ENCODE measurements at regions of chr6 and their contacts with region 1.

Region 1: DNA sequence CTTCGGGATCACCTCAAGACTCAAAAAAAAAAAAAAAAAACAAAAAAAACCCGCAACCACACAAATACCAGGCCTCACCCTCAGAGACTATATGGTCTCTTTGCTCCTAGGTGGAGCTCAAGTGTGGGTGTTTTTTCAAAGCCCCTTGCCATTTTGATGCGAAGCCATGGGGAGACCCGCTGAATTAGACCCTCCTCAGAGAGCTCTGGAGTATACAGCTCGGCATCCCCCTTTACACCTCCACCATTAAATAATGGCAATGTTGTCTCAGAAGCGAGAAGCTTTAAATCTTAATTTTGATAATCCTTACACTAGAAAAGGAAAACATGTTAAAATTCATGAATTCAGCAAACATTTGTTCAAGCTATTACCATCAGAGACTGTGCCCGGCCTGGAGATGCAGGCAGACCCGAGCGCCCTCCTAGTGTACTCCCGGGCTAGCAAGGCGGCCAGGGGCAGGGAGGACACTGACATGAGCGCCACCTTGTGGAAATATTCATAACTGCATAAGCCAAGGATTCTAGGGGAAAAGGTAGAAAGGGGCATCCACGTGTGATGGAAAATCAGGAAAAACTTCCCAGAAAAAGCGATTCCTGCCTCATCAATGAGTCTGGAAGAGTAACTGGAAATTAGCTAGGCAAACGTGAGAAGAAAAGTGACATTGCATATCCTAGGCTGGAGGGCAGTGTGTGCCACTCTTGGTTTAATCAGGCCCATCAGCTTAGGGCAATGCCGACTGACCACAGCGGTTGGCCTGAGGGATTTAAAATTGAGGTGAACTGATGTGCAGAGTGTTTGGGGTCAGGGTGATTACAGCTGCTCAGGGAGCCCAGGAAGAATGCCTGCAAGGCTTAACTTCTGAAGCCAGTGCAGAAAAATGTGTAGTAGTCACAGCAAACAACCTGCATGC is 72.5 kb downstream of the B3GAT2 start:
- DNase-seq: peak; percentile 29 to 89
- H3K4me3 ChIP-seq: no peak overlapping the region
- H3K27ac ChIP-seq: no peak overlapping the region
- H3K4me1 ChIP-seq: peaks cover 5 to 17% (median 11%) of the 10 kb centered on the region in 4 experiments
- H3K27me3 ChIP-seq: no peaks in the 10 kb centered on the region
- CTCF ChIP-seq: peak; percentile 74 to 94 (median 82)
- EP300 ChIP-seq: no peak
- POLR2A ChIP-seq: no peak
- RAD21 ChIP-seq: peak; percentile 91 to 92

Region 2: GRCh38 chr6:70706491-70707123 is 177.7 kb before region 1 on chr6:
- CTCF ChIA-PET with region 1: interaction called, 62 read pairs
- POLR2A ChIA-PET with region 1: no interaction called
- DNase-seq: no peak
- H3K4me3 ChIP-seq: no peak overlapping the region
- H3K27ac ChIP-seq: no peak overlapping the region
- H3K4me1 ChIP-seq: peaks cover 0 to 6% (median 0%) of the 10 kb centered on the region in 4 experiments; a peak in 1 of 7 replicates
- H3K27me3 ChIP-seq: no peaks in the 10 kb centered on the region
- CTCF ChIP-seq: peak in 2 of 3 experiments; percentile 13 to 39; a peak in 2 of 4 replicates
- EP300 ChIP-seq: no peak
- POLR2A ChIP-seq: no peak
- RAD21 ChIP-seq: peak; percentile 51 to 63

Region 3: GRCh38 chr6:70839286-70840266 is 44.8 kb before region 1 on chr6:
- CTCF ChIA-PET with region 1: interaction called, 10 read pairs
- POLR2A ChIA-PET with region 1: no interaction called
- DNase-seq: no peak
- H3K4me3 ChIP-seq: no peak overlapping the region
- H3K27ac ChIP-seq: no peak overlapping the region
- H3K4me1 ChIP-seq: peaks cover 0 to 3% (median 0%) of the 10 kb centered on the region in 4 experiments; a peak in 1 of 7 replicates
- H3K27me3 ChIP-seq: no peaks in the 10 kb centered on the region
- CTCF ChIP-seq: no peak
- EP300 ChIP-seq: no peak
- POLR2A ChIP-seq: no peak
- RAD21 ChIP-seq: no peak

Region 4: DNA sequence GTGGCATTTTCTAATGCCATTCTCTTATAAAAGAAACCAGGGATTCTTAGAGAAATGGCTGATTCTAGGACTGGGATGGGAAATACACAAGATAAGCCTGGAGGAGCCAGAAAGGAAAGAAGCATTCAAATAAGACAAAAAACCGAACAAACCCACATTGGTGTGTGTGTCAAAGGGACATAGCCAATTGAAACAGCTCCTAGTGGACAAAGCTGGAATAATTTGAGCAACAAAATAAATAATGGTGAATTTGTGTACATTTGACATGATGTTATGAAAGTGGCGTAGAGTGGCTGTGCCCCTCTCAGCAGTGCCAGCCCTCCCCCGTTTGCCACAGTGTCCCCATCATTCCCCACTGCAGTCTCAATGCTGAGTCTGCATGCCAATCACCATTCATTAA is 17.0 kb after region 1 on chr6:
- CTCF ChIA-PET with region 1: interaction called, 10 read pairs
- POLR2A ChIA-PET with region 1: no interaction called
- DNase-seq: no peak
- H3K4me3 ChIP-seq: no peak overlapping the region
- H3K27ac ChIP-seq: no peak overlapping the region
- H3K4me1 ChIP-seq: peaks cover 0 to 3% (median 0%) of the 10 kb centered on the region in 4 experiments; a peak in 1 of 7 replicates
- H3K27me3 ChIP-seq: no peaks in the 10 kb centered on the region
- CTCF ChIP-seq: peak in 1 of 3 experiments; percentile 31; a peak in 1 of 4 replicates
- EP300 ChIP-seq: no peak
- POLR2A ChIP-seq: no peak
- RAD21 ChIP-seq: no peak

Region 5: GRCh38 chr6:70973604-70974003 is 89.3 kb after region 1 on chr6:
- CTCF ChIA-PET with region 1: no interaction called
- POLR2A ChIA-PET with region 1: no interaction called
- DNase-seq: no peak
- H3K4me3 ChIP-seq: no peak overlapping the region
- H3K27ac ChIP-seq: no peak overlapping the region
- H3K4me1 ChIP-seq: no peaks in the 10 kb centered on the region
- H3K27me3 ChIP-seq: peaks cover 0 to 1% (median 0%) of the 10 kb centered on the region in 4 experiments; a peak in 1 of 7 replicates
- CTCF ChIP-seq: no peak
- EP300 ChIP-seq: no peak
- POLR2A ChIP-seq: no peak
- RAD21 ChIP-seq: no peak

Region 6: DNA sequence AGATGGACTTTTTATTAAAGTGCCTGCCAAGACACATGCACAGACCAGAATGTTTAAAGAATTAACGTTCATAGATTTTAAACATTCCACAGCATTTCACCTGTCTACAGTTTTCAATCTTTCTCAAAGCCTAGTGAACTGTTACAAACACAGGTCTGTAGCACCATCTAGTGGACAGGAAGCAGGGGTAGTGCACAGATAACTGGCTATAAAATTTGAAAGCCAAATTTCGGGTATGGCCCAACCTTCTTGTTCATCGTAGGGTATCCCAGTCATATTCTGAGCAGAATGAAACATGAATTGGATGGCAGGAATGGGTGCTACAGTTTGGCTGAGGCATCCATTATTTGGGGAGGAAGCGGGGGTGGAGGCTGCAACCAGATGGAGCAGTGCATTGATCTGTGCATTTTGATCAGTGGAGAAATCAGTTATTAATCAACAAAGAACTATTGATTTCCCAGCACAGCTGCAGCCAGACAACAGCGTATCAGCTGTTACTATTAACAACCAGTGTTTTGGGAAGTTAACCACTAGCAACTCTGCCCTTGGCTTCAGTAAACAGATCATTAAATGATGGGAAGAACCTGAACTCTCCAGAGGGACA is 128.6 kb after region 1 on chr6:
- CTCF ChIA-PET with region 1: interaction called, 29 read pairs
- POLR2A ChIA-PET with region 1: no interaction called
- DNase-seq: no peak
- H3K4me3 ChIP-seq: no peak overlapping the region
- H3K27ac ChIP-seq: no peak overlapping the region
- H3K4me1 ChIP-seq: no peaks in the 10 kb centered on the region; a peak in 2 of 7 replicates
- H3K27me3 ChIP-seq: no peaks in the 10 kb centered on the region
- CTCF ChIP-seq: peak in 2 of 3 experiments; percentile 79 to 81; a peak in 3 of 4 replicates
- EP300 ChIP-seq: no peak
- POLR2A ChIP-seq: no peak
- RAD21 ChIP-seq: peak; percentile 92 to 95

Measured in H1 (cell line).